ENCODE measurements at regions of chr9 and their contacts with region 1.

Region 1: GRCh38 chr9:36023260-36024048 is 13.3 kb upstream of the RECK start:
- DNase-seq: peak; percentile 70 to 91
- H3K4me3 ChIP-seq: no peak overlapping the region
- H3K27ac ChIP-seq: no peak overlapping the region
- H3K4me1 ChIP-seq: peaks cover 0 to 4% (median 0%) of the 10 kb centered on the region in 4 donors
- H3K27me3 ChIP-seq: no peaks in the 10 kb centered on the region
- CTCF ChIP-seq: peak in 5 of 7 experiments; percentile 32 to 76 (median 68)
- EP300 ChIP-seq: no peak
- POLR2A ChIP-seq: no peak

Region 2: DNA sequence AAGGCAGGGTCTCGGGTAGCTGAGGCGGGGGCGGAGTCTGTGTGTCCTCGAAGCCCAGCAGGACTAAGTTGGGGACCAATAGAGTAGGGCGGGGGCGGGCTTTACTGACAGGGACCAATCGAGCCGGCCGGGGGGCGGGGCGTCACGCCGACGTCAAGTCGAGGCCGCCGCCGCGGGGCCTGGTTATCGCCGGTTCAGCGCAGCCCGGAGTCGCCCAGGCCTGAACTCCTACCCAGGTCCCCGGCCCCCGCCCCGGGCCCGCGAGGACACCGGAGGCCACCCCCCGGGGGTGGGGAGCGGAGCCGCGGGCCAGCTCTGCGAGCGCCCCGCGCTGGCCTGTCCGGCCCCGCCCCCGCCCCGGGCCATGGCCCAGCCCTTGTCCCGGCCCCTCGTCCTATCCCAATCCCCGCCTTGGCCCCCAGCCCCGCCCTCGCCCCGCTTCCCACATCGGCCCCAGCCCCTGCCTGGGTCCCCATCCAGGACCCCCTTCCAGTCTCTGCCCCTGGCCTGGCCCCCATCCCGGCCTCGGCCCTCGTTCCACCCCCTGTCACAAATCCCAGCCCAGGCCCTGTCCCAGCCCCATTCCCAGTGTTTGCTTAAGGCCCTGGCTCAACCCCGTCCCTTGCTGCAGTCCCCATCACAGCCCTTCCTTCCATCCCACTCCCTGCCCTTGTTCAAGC is 194.2 kb before region 1 on chr9 and contains the start of gene TMEM8B:
- intact Hi-C with region 1: no loop called
- DNase-seq: peak; percentile 99
- H3K4me3 ChIP-seq: peak within 1 kb of the TSS; percentile 61 to 90 (median 78)
- H3K27ac ChIP-seq: peak within 1 kb of the TSS; percentile 95 to 100 (median 98)
- H3K4me1 ChIP-seq: peaks cover 36 to 64% (median 58%) of the 10 kb centered on the region in 4 donors
- H3K27me3 ChIP-seq: no peaks in the 10 kb centered on the region
- CTCF ChIP-seq: no peak
- EP300 ChIP-seq: no peak
- POLR2A ChIP-seq: no peak
- total RNA-seq, gene TMEM8B: 4.6 to 81.4 (median 11.6) TPM

Region 3: GRCh38 chr9:35954942-35955546 is 68.4 kb before region 1 on chr9:
- intact Hi-C with region 1: loop called (anchors 5 kb)
- DNase-seq: peak; percentile 64 to 93
- H3K4me3 ChIP-seq: no peak overlapping the region
- H3K27ac ChIP-seq: no peak overlapping the region
- H3K4me1 ChIP-seq: peaks cover 0 to 7% (median 0%) of the 10 kb centered on the region in 4 donors
- H3K27me3 ChIP-seq: peaks cover 0 to 15% (median 0%) of the 10 kb centered on the region in 3 donors
- CTCF ChIP-seq: peak in 5 of 7 experiments; percentile 39 to 74 (median 69)
- EP300 ChIP-seq: no peak
- POLR2A ChIP-seq: no peak